ENCODE measurements at regions of chr6 and their contacts with region 1.

Region 1: GRCh38 chr6:151765444-151765886 is 42.0 kb upstream of the ESR1 start:
- DNase-seq: peak in 2 of 4 donors; percentile 24 to 52
- ATAC-seq: peak; percentile 76
- H3K4me3 ChIP-seq: no peak overlapping the region
- H3K27ac ChIP-seq: no peak overlapping the region
- H3K4me1 ChIP-seq: peaks cover 0 to 13% of the 10 kb centered on the region in 2 donors
- H3K27me3 ChIP-seq: no peaks in the 10 kb centered on the region
- CTCF ChIP-seq: peak; percentile 54 to 80

Region 2: DNA sequence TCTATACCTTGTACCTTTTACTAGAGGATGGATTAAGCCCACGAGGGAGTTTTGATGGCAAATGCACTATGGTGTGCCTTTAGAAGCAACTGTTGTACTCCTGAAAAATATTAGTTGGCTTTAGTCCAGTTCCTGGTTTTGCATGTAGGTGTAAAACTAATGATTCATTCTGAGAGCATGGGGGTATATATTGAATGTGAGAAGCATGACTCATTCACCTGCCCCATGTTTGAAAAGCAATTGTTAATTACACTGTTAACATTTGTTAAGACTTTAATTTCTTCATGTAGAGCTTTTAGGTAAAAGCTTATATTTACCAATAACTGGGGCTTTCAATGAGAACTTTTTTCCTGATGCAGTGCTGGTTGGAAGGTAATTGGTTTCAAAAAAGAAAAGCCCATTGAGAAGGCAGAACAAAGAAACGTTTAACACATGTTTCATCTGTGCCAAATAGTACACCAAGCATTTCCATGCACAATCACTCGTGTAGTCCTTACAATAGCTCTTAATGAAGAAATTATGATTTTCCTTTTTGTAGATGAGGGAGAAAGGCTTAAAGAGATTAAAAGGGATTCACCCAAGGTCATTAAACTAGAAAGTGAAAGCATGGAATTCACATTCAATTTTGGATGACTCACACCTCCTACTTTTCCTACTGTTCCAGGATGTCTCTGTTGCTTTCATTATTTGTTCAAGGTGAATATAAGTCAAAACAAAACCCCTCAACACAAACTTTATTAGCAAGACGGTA is 137.6 kb before region 1 on chr6:
- intact Hi-C with region 1: no loop called
- DNase-seq: no peak
- ATAC-seq: peak; percentile 50
- H3K4me3 ChIP-seq: no peak overlapping the region
- H3K27ac ChIP-seq: no peak overlapping the region
- H3K4me1 ChIP-seq: no peaks in the 10 kb centered on the region
- H3K27me3 ChIP-seq: peaks cover 0 to 3% of the 10 kb centered on the region in 2 donors
- CTCF ChIP-seq: no peak

Region 3: DNA sequence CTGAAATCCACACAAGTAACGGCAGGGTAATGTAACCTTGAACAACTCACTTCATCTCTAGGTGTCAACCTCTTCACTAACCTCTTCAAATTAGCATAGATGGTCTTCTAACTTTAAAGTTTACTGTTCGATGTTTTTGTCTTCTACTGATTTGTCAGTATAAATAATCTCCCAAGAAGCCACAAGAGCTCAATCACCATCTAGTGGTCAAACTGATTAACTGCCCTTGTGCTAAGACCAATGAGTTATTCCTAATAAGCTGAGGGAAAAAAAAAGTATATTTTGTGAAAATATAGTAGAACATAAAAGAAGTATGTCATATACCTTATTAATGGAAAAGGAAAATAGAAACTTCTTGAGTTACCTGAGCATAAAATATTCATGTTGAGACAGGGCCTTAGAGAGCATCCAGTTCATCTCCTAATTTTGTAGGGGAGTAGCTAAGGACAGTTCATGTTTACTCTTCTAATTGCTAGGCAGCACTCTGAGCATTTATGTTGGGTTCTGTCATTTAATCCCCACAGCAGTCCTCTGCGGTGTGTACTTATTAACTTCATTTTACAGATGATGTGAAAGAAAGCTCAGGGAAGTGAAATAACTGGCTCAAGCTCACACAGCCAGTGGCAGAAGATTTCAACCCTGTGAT is 359.1 kb after region 1 on chr6:
- intact Hi-C with region 1: loop called in 1 of 2 experiments (anchors 10 kb)
- DNase-seq: peak in 1 of 4 donors; percentile 26
- ATAC-seq: peak; percentile 79
- H3K4me3 ChIP-seq: no peak overlapping the region
- H3K27ac ChIP-seq: no peak overlapping the region
- H3K4me1 ChIP-seq: peaks cover 0 to 13% of the 10 kb centered on the region in 2 donors
- H3K27me3 ChIP-seq: no peaks in the 10 kb centered on the region
- CTCF ChIP-seq: peak; percentile 58 to 64

Measured in left lung (tissue), 14 donors.